CD4-positive, alpha-beta T cell (primary cell): ENCODE measurements at regions of chr12 and their contacts with region 1.

Region 1: DNA sequence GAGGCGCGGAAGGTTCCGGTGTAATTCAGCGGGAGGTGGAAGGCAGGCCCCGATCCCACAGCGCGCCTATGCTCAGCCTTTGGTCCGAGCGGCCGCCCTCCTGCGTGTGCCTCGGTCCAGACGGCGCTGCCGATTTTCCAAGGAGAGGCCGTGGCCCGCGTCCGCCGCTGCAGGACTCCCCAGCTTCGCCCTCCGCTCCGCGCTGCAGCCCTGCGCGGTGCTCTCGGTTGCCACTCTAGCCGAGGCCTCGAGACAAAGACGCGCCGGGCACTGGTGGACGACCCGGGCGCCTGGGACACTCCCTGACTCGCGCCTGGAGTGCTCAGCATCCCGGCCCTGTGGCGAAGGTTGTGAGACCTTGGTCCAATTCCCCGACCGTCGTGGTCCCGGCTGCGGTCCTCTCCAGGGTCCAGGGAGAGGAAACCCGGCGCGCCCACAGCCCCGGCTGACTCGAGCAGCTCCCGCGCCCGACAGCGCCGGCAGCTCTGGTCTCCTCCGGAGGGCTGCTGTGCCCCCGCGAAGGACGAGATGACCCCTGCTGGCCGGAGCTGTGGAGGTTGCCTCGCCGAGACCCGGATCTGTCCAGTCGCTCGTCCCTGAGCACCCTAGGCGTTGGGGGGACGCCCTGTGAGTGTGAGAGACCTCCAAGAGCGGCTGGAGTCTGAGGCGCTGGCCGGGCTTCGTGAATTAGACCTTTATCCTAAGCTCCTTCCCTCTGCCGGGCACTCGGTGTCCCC is 6.5 kb downstream of the HOXC12 start:
- DNase-seq: no peak
- ATAC-seq: no peak
- H3K4me3 ChIP-seq: no peak overlapping the region
- H3K4me3 Mint-ChIP-seq: no peak overlapping the region
- H3K27ac ChIP-seq: no peak overlapping the region
- H3K27ac Mint-ChIP-seq: no peak overlapping the region
- H3K4me1 ChIP-seq: peaks cover 46% of the 10 kb centered on the region
- H3K4me1 Mint-ChIP-seq: peaks cover 43% of the 10 kb centered on the region
- H3K27me3 ChIP-seq: peaks cover 95 to 100% of the 10 kb centered on the region in 2 experiments
- H3K27me3 Mint-ChIP-seq: peaks cover 95% of the 10 kb centered on the region
- CTCF ChIP-seq: no peak

Region 2: GRCh38 chr12:53995378-53996239 is 34.4 kb after region 1 on chr12:
- CTCF ChIA-PET with region 1: no interaction called
- POLR2A ChIA-PET with region 1: no interaction called
- intact Hi-C with region 1: loop called in 1 of 2 experiments (anchors 5 kb)
- DNase-seq: peak in 3 of 14 experiments; percentile 36 to 54 (median 48)
- ATAC-seq: peak; percentile 50
- H3K4me3 ChIP-seq: peak overlapping the region; percentile 58
- H3K4me3 Mint-ChIP-seq: peak overlapping the region; percentile 88
- H3K27ac ChIP-seq: no peak overlapping the region
- H3K27ac Mint-ChIP-seq: no peak overlapping the region
- H3K4me1 ChIP-seq: peaks cover 60% of the 10 kb centered on the region
- H3K4me1 Mint-ChIP-seq: peaks cover 61% of the 10 kb centered on the region
- H3K27me3 ChIP-seq: peaks cover 97 to 99% of the 10 kb centered on the region in 2 experiments
- H3K27me3 Mint-ChIP-seq: peaks cover 100% of the 10 kb centered on the region
- CTCF ChIP-seq: no peak

Region 3: DNA sequence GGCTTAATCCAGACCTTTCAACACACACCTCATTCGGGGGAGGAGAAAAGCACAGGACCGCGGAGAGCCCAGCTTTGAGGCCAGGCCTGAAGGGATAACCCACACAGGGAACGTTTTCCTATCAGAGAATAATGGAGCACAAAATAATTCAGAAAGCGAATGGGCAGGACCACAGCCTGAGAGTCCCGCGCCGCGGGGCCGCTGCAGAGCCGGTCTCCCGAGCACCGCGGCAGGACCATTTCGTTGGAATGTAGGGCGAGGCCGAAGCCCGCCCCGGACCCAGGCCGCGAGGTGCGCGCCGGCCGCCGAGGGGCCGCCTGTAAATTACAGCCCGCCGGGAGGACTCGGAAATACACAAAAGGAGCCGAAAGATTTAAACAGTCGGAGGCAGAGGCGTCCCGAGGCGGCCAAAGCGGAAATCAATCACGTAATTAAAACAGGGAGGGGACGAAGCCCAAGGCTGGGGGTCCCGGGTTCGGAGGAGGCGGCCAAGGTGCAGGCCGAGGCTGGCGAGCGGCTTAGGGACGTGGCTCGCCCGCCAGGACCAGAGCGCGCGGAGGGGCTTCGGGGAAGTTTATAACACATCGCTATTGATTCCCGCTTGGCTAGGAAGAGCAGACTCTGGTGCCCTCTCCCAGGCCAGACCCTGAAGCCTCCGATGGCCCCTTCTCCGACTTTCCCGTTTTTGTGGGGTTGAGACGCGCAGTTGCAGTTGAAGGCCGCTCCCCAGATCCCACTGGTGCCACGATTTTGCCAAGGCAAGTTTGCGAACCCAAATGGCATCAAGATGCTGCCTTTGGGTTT is 86.2 kb after region 1 on chr12:
- CTCF ChIA-PET with region 1: no interaction called
- POLR2A ChIA-PET with region 1: no interaction called
- intact Hi-C with region 1: loop called in 1 of 2 experiments (anchors 5 kb)
- DNase-seq: no peak
- ATAC-seq: no peak
- H3K4me3 ChIP-seq: no peak overlapping the region
- H3K4me3 Mint-ChIP-seq: peak overlapping the region; percentile 59
- H3K27ac ChIP-seq: no peak overlapping the region
- H3K27ac Mint-ChIP-seq: no peak overlapping the region
- H3K4me1 ChIP-seq: peaks cover 32% of the 10 kb centered on the region
- H3K4me1 Mint-ChIP-seq: peaks cover 36% of the 10 kb centered on the region
- H3K27me3 ChIP-seq: peaks cover 91 to 97% of the 10 kb centered on the region in 2 experiments
- H3K27me3 Mint-ChIP-seq: peaks cover 100% of the 10 kb centered on the region
- CTCF ChIP-seq: no peak